Right ventricle myocardium inferior (tissue), 1 donor: ENCODE measurements at regions of chr10 and their contacts with region 1.

Region 1: DNA sequence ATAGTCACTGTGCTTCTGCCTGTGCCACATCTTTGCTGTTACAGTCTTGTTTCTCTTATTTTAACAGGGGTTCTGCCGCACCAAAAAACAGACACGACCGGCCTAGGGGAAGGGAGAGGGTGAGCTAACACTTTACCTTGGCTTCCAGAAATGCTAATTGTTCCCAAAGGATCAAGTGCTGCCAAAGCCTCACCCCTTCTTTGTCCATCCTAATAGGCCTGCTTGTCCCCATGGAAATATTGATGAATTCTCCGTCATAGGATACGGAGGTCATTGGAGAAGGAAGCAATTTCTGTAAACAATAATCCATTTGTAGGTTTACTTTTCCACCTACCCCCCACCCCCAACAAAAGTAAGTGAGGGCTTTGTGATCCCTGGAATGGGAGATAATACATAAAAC is 567.3 kb downstream of the KCNMA1 start:
- DNase-seq: no peak
- ATAC-seq: peak; percentile 19

Region 2: DNA sequence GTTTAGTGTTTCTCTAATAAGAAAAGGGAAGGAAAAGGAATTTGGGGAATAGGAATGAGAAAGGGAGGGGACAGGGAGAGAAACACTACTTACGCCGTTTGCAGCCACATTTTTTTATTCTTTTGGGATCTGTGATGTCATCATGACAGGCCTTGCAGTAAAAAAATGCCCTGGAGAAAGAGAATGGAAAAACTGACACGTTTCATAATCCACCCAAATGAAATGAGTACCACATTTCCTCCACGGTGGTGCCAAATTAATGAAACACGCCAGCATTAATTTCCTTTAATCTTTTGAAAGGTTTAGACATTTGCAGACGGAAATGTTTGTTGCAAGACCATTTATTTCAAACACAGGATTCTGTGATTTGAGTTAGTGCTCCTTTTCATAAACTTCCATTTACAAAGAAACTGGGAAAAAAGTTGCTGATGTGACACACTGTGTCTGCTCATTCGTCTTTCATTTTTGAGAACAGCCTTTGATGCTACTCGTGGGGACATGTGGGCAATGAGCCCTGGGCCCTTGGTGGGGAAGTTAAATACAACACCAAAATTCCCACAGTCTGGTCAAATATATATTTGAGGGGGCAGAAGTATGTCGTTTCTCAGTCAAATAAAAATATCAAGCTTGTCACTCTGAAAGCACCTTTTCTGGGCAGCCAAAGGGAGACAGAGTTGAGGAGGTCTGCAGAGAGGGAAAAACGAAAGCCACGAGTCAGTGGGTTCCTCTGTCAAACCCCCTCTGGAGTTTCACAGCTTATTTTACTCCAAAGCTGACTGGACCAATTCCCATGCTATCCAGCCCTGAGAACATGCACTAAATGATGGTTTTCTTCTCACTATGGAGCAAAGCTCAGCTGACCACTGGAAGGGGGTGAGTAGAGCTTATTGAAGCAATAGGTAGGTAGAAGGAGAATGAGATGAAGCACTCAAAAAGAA is 58.2 kb before region 1 on chr10:
- intact Hi-C with region 1: loop called (anchors 1 kb)
- DNase-seq: no peak
- ATAC-seq: peak; percentile 71